PC-3 (cell line): ENCODE measurements at regions of chr1 and their contacts with region 1.

Region 1: DNA sequence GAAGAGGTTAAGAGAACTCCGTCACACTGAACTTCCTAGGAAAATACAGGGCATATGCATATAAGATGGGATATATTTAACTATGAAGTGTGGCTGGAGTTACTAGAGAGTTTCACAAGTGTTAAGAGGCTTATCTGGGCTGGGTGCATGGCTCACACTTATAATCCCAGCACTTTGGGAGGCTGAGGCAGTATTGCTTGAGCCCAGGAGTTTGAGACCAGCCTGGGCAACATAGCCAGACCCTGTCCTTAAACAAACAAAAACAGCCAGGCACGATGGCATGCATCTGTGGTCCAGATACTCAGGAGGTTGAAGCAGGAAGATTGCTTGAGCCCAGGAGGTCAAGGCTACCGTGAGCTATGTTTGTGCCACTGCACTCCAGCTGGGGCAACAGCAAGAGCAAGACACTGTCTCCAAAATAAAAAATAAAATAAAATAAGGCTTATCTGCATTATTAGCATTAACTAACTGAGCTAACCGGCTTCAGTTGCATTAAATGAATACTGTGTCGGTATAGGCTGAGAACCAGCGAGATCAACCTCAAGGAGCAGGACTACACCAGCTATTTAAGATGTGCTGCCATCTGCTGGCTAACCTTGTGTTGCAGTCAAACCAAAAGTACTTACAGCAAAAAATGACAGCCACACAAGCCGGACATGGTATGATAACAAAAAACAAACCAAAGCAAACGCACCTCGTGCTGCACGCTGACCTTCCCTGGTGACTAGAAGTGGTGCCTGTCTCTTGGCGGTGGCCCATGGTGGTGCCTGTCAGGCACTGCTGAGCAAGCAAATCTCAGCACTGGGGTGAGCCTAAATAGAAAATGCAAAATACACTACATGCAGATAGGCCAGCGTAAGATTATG is 19.7 kb upstream of the RBBP5 start:
- DNase-seq: peak; percentile 90
- ATAC-seq: peak; percentile 92
- H3K4me3 ChIP-seq: no peak overlapping the region
- H3K27ac ChIP-seq: no peak overlapping the region
- H3K4me1 ChIP-seq: peaks cover 10% of the 10 kb centered on the region
- H3K27me3 ChIP-seq: no peaks in the 10 kb centered on the region
- CTCF ChIP-seq: peak; percentile 93

Region 2: DNA sequence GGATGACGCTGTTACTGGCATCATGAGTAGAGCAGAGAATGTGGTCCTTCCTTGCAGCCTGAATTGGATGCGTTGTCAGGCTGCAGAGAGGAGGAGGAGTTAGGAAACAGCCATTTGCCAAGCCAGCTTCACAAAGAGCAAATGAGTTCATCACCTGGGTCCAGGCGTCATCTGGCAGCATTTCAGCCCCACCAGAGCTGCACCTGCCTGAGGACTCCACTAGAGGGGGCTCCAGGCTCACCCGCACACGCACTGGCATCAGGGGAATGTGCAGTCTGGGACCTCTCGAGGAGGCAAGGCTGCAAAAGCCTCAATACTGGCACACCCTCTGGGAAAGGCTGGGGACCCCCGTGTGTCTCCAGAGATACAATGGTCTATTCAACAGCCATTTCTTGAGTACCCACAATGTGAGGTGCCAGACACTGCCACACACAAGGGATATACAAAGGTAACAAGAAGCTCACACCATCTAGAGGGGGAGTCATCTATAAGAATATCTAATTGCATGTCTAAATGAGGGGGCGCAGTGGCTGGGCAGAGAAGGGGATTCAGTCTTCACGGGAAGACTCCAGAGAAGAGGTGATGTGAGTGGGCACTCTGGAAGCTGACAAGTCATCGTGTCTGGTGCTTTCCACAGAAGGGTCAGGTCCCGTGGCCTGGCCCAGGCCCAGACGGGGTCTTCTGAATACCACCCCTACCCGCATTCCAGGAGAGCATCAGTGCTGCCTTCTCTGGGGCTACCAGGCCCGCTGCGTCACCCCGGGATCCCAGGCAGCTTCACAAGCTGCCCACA is 152.0 kb before region 1 on chr1:
- CTCF ChIA-PET with region 1: interaction called, 3 read pairs
- POLR2A ChIA-PET with region 1: no interaction called
- intact Hi-C with region 1: loop called (anchors 10 kb)
- DNase-seq: peak; percentile 94
- ATAC-seq: peak; percentile 82
- H3K4me3 ChIP-seq: no peak overlapping the region
- H3K27ac ChIP-seq: no peak overlapping the region
- H3K4me1 ChIP-seq: no peaks in the 10 kb centered on the region
- H3K27me3 ChIP-seq: peaks cover 89% of the 10 kb centered on the region
- CTCF ChIP-seq: peak; percentile 100